A673 (cell line): ENCODE measurements at regions of chr20 and their contacts with region 1.

Region 1: DNA sequence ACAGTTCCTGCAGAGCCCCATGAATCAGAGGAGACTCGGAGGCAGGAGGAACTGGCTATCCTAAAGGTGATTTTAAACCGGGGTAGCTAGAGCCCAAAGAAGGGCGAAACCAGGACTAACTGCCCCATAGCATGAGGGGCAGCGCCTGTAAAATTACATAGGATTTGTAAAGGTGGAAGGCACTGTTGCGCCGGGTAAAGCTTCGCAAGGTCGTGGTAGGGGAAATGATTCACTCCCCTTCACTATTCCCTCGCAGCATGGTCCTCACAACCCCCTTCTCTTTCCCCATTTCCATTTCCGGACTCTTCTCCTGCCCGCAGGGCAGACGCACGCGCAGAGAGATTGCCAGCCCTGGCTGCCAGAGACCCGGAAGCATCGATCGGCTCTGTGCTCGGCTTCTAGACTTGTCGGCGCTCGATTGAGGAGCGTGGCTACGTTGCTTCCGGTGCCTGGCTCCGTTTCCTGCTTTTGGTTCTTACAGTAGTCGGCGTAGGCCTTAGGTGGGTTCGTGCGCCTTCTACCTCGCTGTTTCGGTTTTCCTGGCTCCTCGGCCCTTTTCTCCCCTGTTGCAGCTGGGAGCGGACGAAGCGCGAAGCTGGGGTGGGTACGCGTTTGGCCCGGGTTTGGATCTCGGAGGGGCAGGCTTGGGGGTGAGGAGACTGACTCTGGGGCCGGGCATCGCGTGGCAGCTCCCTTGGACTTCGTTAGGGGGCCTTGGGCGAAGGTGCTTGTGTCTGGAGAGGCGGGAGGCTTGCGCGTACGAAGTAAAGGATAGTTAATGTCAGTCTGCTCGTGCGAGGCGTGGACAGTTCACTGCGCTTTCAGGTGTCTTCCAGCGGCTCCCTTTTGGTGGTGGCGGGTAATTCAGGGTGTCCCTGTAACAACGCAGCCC is at the start of gene SNRPB2:
- DNase-seq: peak; percentile 97
- H3K4me3 ChIP-seq: peak within 1 kb of the TSS; percentile 78
- H3K27ac ChIP-seq: peak within 1 kb of the TSS; percentile 92
- H3K4me1 ChIP-seq: peaks cover 8% of the 10 kb centered on the region
- H3K27me3 ChIP-seq: peaks cover 27% of the 10 kb centered on the region
- CTCF ChIP-seq: no peak
- total RNA-seq, gene SNRPB2: 90.4 and 103 TPM in 2 replicates

Region 2: GRCh38 chr20:16115911-16116552 is 613.8 kb before region 1 on chr20:
- CTCF ChIA-PET with region 1: no interaction called
- POLR2A ChIA-PET with region 1: no interaction called
- intact Hi-C with region 1: no loop called
- DNase-seq: no peak
- H3K4me3 ChIP-seq: no peak overlapping the region
- H3K27ac ChIP-seq: no peak overlapping the region
- H3K4me1 ChIP-seq: no peaks in the 10 kb centered on the region
- H3K27me3 ChIP-seq: no peaks in the 10 kb centered on the region
- CTCF ChIP-seq: no peak

Region 3: DNA sequence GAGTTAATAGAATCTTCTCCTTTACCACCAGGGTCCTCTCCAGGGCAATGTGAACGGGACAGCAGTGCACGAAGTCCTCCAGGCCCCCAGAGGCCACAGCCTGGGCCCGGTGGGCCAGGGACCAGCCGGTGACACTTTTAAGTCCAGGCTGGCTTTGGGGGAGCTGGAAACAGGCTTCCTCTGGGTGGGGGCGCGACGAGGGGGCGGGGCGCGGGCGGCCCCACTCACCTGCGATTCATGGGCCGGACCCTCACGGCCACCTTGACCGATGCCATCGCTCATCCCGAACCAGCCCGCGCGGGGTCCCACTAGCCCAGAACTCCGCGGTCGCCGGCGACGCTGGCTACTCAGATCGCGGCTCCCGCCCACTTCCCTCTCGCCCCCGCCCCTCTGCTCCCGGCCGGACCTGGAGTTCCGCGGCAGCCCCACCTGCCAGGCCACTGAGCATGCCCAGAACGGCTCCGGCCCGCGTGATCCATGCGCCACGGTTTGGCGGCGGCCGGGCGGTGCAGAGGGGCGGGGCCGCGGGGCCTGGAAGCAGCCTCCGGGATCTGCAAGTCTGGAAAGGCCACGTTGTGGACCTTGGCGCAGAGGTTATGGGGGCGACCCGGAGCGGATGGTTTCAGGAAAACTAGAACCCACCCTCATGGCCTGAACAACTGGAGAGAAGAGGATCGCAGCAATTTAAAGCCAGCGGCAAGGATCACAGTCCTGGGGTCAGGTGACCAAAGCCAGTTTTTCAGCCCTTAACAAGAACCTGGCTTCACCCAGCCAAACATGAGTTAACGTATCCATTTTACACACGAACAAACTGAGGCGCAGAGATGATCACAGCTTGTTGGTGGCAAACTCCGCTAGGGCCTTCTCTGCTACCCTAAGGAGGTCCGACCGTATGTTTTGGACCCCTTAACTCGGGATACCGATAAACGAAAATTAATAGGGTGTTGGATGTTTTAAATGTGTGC is 156.5 kb before region 1 on chr20 and contains the start of gene KIF16B:
- CTCF ChIA-PET with region 1: no interaction called
- POLR2A ChIA-PET with region 1: no interaction called
- intact Hi-C with region 1: loop called (anchors 10 kb)
- DNase-seq: peak; percentile 90
- H3K4me3 ChIP-seq: peak within 1 kb of the TSS; percentile 74
- H3K27ac ChIP-seq: peak within 1 kb of the TSS; percentile 27
- H3K4me1 ChIP-seq: peaks cover 6% of the 10 kb centered on the region
- H3K27me3 ChIP-seq: no peaks in the 10 kb centered on the region
- CTCF ChIP-seq: no peak
- total RNA-seq, gene KIF16B: 4.6 and 5.2 TPM in 2 replicates